ENCODE measurements at regions of chr4 and their contacts with region 1.

Region 1: GRCh38 chr4:132557660-132558059 is 591.4 kb upstream of the PCDH10 start:
- DNase-seq: no peak
- H3K4me3 ChIP-seq: no peak overlapping the region
- H3K27ac ChIP-seq: no peak overlapping the region
- H3K4me1 ChIP-seq: no peaks in the 10 kb centered on the region
- H3K27me3 ChIP-seq: no peaks in the 10 kb centered on the region
- CTCF ChIP-seq: peak in 2 of 3 experiments; percentile 24 to 67; a peak in 2 of 4 replicates
- EP300 ChIP-seq: no peak
- POLR2A ChIP-seq: no peak
- RAD21 ChIP-seq: peak; percentile 31 to 56; a peak in 3 of 4 replicates

Region 2: DNA sequence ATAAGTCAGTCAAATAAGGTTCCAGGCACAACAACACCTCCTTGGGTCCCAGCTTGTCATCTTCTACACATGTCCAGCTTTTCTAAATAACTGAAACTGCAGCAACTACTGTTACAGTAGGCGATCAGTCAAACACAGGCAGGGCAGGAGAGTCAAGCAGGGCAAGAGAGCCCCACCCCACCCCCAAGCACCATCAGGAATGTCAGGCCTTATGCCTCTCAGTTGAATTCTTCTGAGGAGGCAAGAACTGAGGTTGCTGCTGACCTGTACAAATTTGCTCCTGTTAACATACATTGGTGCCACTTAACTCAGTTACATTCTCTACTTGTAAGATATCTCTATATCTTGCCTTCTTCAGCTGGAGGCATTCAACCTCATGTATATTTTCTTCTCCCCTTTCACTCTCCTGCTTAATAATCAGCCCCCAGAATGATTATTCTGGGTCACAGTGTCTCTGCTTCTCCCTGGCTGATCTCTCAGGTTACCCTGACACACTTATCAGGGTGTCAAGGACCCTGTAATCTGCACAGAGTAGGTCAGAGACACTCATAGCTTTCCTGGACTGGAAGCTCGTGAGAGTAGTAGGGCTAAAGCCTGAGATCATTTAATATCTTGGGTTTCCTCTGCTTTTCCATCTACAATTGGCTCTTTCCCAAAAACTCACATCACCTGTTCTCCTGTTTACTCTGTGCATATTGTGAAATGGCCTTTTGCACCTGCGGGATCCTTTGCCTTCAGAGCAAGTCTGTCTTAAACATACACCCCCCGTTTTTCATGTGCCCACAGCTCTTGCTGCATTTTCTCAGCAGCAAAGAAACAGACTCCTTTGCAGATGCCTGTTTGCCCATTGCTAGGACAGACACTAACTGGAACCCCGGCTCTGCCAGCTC is 17.1 kb before region 1 on chr4:
- CTCF ChIA-PET with region 1: interaction called, 10 read pairs
- POLR2A ChIA-PET with region 1: no interaction called
- DNase-seq: no peak
- H3K4me3 ChIP-seq: no peak overlapping the region
- H3K27ac ChIP-seq: no peak overlapping the region
- H3K4me1 ChIP-seq: no peaks in the 10 kb centered on the region
- H3K27me3 ChIP-seq: no peaks in the 10 kb centered on the region
- CTCF ChIP-seq: no peak
- EP300 ChIP-seq: no peak
- POLR2A ChIP-seq: no peak
- RAD21 ChIP-seq: no peak